Left cardiac atrium (tissue), 4 donors: ENCODE measurements at regions of chr14 and their contacts with region 1.

Region 1: GRCh38 chr14:70832536-70833305 is 23.4 kb upstream of the MAP3K9 start:
- DNase-seq: no peak
- ATAC-seq: peak; percentile 73 to 88

Region 2: GRCh38 chr14:70448633-70449340 is 383.9 kb before region 1 on chr14:
- intact Hi-C with region 1: no loop called
- DNase-seq: no peak
- ATAC-seq: peak in 1 of 2 donors; percentile 26

Region 3: GRCh38 chr14:70897464-70897863 is 64.7 kb after region 1 on chr14:
- intact Hi-C with region 1: loop called in 1 of 2 experiments (anchors 10 kb)
- DNase-seq: no peak
- ATAC-seq: peak; percentile 60 to 74

Region 4: GRCh38 chr14:70926235-70926830 is 93.6 kb after region 1 on chr14:
- intact Hi-C with region 1: no loop called
- DNase-seq: no peak
- ATAC-seq: no peak